ENCODE measurements at regions of chr15 and their contacts with region 1.

Region 1: DNA sequence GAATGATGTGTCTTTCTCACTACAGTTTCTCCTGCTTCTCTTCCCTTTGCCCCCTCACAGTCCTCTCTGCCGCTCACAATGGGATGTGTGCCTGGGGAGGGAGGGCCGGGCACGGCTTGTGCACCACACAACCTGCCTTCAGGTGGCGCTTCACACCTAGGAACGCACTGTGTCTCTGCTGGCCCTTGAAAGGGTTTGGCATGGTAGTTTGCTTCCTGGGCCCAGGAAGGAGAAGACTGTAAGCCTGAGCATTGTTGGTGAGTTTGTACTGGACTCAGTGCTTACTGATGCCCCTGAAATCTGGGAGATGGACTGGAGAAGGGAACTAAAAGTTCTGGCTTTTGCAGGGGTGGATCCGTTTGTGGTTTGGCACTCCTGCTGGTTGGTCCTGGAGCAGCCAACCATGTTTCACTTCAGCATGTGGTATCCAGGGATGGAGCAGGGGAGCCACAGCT is 9.2 kb downstream of the ALPK3 start:
- DNase-seq: peak; percentile 36
- H3K4me3 ChIP-seq: no peak overlapping the region
- H3K27ac ChIP-seq: no peak overlapping the region
- H3K4me1 ChIP-seq: no peaks in the 10 kb centered on the region
- H3K27me3 ChIP-seq: no peaks in the 10 kb centered on the region
- CTCF ChIP-seq: peak; percentile 39 to 44

Region 2: DNA sequence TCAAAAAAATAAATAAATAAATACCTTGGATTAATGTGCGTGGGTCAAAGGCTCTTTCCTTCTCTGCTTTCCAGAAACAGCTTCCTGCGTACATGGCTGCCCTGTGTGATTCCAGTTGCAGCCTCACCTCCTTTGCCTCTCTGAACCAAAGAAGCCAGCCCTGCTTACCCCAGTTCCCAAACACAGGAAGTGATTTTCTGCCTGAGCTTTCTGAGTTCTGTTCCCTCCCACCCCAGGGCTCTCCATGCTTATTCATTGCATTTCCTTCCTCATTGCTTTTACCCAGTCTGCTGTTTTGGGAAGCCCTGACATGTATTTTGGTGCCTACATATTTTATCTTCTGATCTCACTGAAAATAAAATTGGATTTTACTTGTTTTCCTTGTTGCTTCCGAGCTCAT is 210.2 kb before region 1 on chr15:
- CTCF ChIA-PET with region 1: no interaction called
- dilution Hi-C with region 1: no loop called
- in situ Hi-C with region 1: no loop called
- intact Hi-C with region 1: no loop called
- DNase-seq: no peak
- H3K4me3 ChIP-seq: no peak overlapping the region
- H3K27ac ChIP-seq: no peak overlapping the region
- H3K4me1 ChIP-seq: no peaks in the 10 kb centered on the region
- H3K27me3 ChIP-seq: no peaks in the 10 kb centered on the region
- CTCF ChIP-seq: no peak

Region 3: DNA sequence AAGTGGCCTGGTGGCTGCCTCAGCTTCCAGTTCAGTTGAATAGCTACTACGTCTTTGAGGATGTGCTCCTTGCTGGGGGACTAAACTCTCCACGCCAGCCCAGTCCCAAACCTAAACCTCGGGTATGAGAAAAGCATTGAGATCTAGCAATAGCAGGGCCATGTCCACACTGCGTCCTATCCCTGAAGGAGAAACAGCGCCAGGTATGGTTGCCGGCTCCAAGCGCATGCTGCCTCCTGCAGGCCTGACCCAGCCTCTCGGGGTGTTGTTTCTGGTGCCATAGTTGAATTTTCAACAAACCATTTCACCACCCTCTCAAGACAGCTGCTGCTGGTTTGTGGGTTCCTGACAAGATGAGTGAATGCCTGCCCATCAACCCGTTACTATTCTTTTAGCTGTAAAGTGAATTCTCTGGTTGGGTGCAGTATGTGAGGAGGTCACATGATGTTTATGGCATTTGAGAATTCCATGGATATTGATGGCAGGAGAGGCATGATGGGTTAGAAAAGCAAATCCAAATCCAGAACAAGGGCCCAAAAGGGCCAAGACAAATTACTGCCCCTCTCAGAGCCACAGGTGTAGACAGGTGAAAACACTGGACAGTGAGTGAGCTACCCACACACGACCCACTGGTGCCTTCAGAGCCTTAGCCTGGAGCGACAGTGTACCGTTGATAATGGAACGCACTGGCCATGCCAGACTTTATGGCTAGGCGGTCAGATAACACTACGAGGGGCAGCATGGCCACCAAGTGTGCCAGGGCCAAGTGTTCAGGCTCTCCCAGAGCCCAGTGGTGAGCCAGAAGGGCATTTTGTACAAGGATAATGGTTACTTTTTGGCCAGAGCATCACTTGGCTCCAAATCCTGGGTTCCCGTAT is 45.3 kb after region 1 on chr15:
- CTCF ChIA-PET with region 1: no interaction called
- dilution Hi-C with region 1: no loop called
- in situ Hi-C with region 1: no loop called
- intact Hi-C with region 1: loop called (anchors 5 kb)
- DNase-seq: no peak
- H3K4me3 ChIP-seq: no peak overlapping the region
- H3K27ac ChIP-seq: no peak overlapping the region
- H3K4me1 ChIP-seq: no peaks in the 10 kb centered on the region
- H3K27me3 ChIP-seq: no peaks in the 10 kb centered on the region
- CTCF ChIP-seq: no peak

Region 4: GRCh38 chr15:85073556-85074194 is 247.3 kb after region 1 on chr15:
- CTCF ChIA-PET with region 1: no interaction called
- dilution Hi-C with region 1: no loop called
- in situ Hi-C with region 1: loop called in 1 of 2 experiments (anchors 25 kb)
- intact Hi-C with region 1: no loop called
- DNase-seq: peak; percentile 55
- H3K4me3 ChIP-seq: no peak overlapping the region
- H3K27ac ChIP-seq: no peak overlapping the region
- H3K4me1 ChIP-seq: no peaks in the 10 kb centered on the region
- H3K27me3 ChIP-seq: no peaks in the 10 kb centered on the region
- CTCF ChIP-seq: no peak